ENCODE measurements at regions of chr11 and their contacts with region 1.

Region 1: DNA sequence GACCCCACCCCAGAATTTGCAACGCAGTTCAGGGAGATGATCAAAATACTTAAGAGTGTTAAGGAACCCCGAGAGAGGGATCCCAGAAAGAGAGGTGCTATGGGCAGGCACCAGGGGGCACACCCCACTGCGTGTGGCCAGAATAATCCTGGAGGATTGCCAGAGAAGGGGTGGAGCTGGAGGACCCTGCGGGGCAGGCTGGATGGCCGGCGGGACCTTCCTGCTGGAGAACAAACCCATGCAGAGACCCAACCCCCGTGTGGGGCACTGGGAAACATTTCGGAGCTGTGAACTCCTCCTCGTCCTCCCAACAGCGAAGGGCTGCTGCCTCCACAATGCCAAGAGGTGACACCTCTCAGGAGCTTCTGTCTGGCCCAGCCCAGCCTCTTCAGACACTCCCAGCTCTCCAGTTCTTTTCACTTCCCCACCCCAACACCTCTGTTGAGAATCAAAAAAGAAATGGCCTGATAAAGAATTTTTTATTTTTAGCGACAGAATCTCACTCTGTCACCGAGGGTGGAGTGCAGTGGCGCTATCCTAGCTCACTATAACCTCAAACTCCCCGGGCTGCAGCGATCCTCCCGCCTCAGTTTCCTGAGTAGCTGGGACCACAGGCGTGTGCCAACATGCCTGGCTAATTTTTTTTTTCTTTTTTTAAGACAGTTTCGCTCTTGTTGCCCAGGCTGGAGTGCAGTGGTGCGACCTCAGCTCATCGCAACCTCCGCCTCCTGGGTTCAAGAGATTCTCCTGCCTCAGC is 25.6 kb downstream of the RHOD start:
- DNase-seq: no peak
- H3K4me3 ChIP-seq: no peak overlapping the region
- H3K27me3 ChIP-seq: no peaks in the 10 kb centered on the region
- CTCF ChIP-seq: no peak

Region 2: GRCh38 chr11:67027483-67028196 is 54.6 kb before region 1 on chr11:
- CTCF ChIA-PET with region 1: no interaction called
- POLR2A ChIA-PET with region 1: no interaction called
- DNase-seq: no peak
- H3K4me3 ChIP-seq: no peak overlapping the region
- H3K27me3 ChIP-seq: peaks cover 14% of the 10 kb centered on the region
- CTCF ChIP-seq: no peak

Region 3: DNA sequence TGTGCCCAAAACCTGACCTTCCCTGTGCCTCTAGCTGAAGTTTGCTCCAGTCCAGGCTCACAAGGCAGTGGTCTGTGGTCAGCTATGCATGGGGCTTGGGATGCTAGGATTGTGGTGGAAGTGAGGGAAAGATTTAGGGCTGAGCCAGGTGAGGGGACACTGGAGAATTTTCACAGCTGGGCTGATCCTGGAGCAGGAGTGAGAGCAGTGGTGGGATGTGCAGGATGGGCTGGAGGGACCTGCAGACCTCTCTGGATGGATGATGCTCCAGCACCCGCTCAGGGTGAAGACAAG is 12.9 kb after region 1 on chr11:
- CTCF ChIA-PET with region 1: interaction called, 7 read pairs
- POLR2A ChIA-PET with region 1: interaction called, 14 read pairs
- DNase-seq: no peak
- H3K4me3 ChIP-seq: no peak overlapping the region
- H3K27me3 ChIP-seq: peaks cover 3% of the 10 kb centered on the region
- CTCF ChIP-seq: no peak

Region 4: DNA sequence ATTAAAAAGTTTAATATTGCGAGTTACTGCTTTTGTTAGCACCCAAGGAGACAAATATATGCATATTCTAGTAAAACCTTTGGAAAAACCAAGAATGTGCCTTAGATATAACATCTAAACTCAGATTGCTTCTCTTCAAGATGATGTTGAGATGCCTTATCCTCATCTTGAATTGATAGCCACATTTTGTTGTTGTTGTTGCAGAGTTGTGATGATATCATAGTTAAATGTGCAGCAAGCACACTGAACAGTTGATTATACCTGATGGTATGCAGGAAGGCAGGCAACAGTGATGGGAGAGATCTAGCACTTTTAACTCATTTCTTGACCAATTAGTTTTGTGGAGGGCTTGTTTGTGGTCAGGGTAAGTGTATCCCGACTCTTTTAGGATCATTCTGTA is 84.9 kb after region 1 on chr11:
- CTCF ChIA-PET with region 1: interaction called, 15 read pairs
- POLR2A ChIA-PET with region 1: no interaction called
- DNase-seq: no peak
- H3K4me3 ChIP-seq: no peak overlapping the region
- H3K27me3 ChIP-seq: no peaks in the 10 kb centered on the region
- CTCF ChIP-seq: no peak